ENCODE measurements at regions of chr13 and their contacts with region 1.

Region 1: GRCh38 chr13:37775871-37776270 is 93.7 kb downstream of the TRPC4 start:
- DNase-seq: no peak
- H3K4me3 ChIP-seq: no peak overlapping the region
- H3K27ac ChIP-seq: no peak overlapping the region
- H3K4me1 ChIP-seq: no peaks in the 10 kb centered on the region
- H3K27me3 ChIP-seq: no peaks in the 10 kb centered on the region
- CTCF ChIP-seq: no peak
- EP300 ChIP-seq: no peak
- POLR2A ChIP-seq: no peak

Region 2: GRCh38 chr13:37736045-37736444 is 39.8 kb before region 1 on chr13:
- intact Hi-C with region 1: loop called (anchors 2 kb)
- DNase-seq: no peak
- H3K4me3 ChIP-seq: no peak overlapping the region
- H3K27ac ChIP-seq: no peak overlapping the region
- H3K4me1 ChIP-seq: no peaks in the 10 kb centered on the region
- H3K27me3 ChIP-seq: no peaks in the 10 kb centered on the region
- CTCF ChIP-seq: no peak
- EP300 ChIP-seq: no peak
- POLR2A ChIP-seq: no peak